CD8-positive, alpha-beta T cell (primary cell): ENCODE measurements at regions of chr17 and their contacts with region 1.

Region 1: DNA sequence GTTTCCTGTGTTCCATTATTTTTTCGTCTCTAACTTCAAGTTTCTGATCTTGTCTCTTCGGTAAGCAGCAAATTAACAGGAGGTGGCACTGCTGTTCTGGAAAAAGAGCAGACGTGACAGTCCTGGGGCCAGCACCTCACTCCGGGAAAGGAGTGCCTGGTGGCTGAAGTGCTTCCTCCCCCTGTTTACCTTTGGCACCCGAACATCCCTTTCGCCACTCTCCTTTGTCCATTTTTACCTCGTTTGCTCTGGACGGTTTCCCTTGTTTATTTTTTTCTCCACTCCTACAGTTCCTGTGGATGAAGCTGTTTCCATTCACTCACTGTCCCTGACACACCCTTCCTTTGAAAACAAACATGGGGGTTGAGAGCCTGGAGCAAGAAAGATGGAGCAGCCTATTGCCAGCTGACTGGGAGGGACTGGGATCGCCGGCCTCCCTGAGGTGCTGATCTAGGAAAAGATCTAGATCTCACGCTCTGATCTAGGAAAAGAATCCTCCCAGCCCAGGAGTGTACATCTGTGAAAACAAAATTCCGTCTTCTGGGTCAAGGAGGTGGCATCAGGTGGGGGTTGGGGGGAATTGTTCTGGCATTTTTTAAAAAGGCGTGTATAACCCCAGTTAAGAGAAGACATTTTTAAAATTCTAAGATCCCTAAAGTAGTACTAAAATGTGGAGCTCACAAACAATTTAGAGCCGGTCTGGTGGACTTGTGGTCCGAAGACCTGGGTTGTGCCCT is 12.7 kb downstream of the SAP30BP start:
- DNase-seq: no peak
- ATAC-seq: no peak
- H3K4me3 ChIP-seq: no peak overlapping the region
- H3K4me3 Mint-ChIP-seq: no peak overlapping the region
- H3K27ac ChIP-seq: no peak overlapping the region
- H3K27ac Mint-ChIP-seq: no peak overlapping the region
- H3K4me1 ChIP-seq: no peaks in the 10 kb centered on the region
- H3K4me1 Mint-ChIP-seq: peaks cover 12% of the 10 kb centered on the region
- H3K27me3 ChIP-seq: no peaks in the 10 kb centered on the region
- H3K27me3 Mint-ChIP-seq: no peaks in the 10 kb centered on the region
- CTCF ChIP-seq: no peak

Region 2: GRCh38 chr17:75652915-75653549 is 26.8 kb before region 1 on chr17:
- CTCF ChIA-PET with region 1: interaction called, 11 read pairs
- POLR2A ChIA-PET with region 1: no interaction called
- intact Hi-C with region 1: loop called in 1 of 2 experiments (anchors 1 kb)
- DNase-seq: peak in 6 of 9 experiments; percentile 9 to 64 (median 42)
- ATAC-seq: peak; percentile 100
- H3K4me3 ChIP-seq: no peak overlapping the region
- H3K4me3 Mint-ChIP-seq: no peak overlapping the region
- H3K27ac ChIP-seq: no peak overlapping the region
- H3K27ac Mint-ChIP-seq: no peak overlapping the region
- H3K4me1 ChIP-seq: no peaks in the 10 kb centered on the region
- H3K4me1 Mint-ChIP-seq: peaks cover 9% of the 10 kb centered on the region
- H3K27me3 ChIP-seq: no peaks in the 10 kb centered on the region
- H3K27me3 Mint-ChIP-seq: no peaks in the 10 kb centered on the region
- CTCF ChIP-seq: peak; percentile 59

Region 3: DNA sequence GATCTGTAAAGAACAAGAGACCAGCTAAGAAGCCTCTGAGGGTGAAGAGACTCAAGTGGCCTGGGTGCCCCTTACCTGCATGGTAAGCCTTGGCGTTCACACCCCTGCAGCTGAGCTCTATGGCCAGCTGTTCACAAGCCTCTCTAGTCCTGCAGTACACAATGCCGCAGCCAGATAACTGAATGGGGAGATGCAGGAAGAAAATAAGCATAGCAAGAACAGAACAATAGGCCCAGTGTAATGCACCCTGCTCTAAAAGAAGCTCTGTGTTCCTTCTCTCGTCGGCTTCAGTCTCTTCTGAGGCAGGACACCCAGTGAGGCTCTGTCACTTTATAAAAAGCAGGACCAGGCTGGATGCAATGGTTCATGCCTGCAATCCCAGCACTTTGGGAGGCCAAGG is 18.3 kb before region 1 on chr17:
- CTCF ChIA-PET with region 1: interaction called, 10 read pairs
- POLR2A ChIA-PET with region 1: no interaction called
- intact Hi-C with region 1: no loop called
- DNase-seq: no peak
- ATAC-seq: no peak
- H3K4me3 ChIP-seq: no peak overlapping the region
- H3K4me3 Mint-ChIP-seq: no peak overlapping the region
- H3K27ac ChIP-seq: no peak overlapping the region
- H3K27ac Mint-ChIP-seq: no peak overlapping the region
- H3K4me1 ChIP-seq: peaks cover 8% of the 10 kb centered on the region
- H3K4me1 Mint-ChIP-seq: peaks cover 13% of the 10 kb centered on the region
- H3K27me3 ChIP-seq: no peaks in the 10 kb centered on the region
- H3K27me3 Mint-ChIP-seq: no peaks in the 10 kb centered on the region
- CTCF ChIP-seq: no peak

Region 4: GRCh38 chr17:75693500-75694481 is 13.9 kb after region 1 on chr17:
- CTCF ChIA-PET with region 1: interaction called, 11 read pairs
- POLR2A ChIA-PET with region 1: no interaction called
- intact Hi-C with region 1: loop called in 1 of 2 experiments (anchors 1 kb)
- DNase-seq: no peak
- ATAC-seq: no peak
- H3K4me3 ChIP-seq: no peak overlapping the region
- H3K4me3 Mint-ChIP-seq: no peak overlapping the region
- H3K27ac ChIP-seq: no peak overlapping the region
- H3K27ac Mint-ChIP-seq: no peak overlapping the region
- H3K4me1 ChIP-seq: peaks cover 26% of the 10 kb centered on the region
- H3K4me1 Mint-ChIP-seq: peaks cover 34% of the 10 kb centered on the region
- H3K27me3 ChIP-seq: no peaks in the 10 kb centered on the region
- H3K27me3 Mint-ChIP-seq: no peaks in the 10 kb centered on the region
- CTCF ChIP-seq: no peak

Region 5: DNA sequence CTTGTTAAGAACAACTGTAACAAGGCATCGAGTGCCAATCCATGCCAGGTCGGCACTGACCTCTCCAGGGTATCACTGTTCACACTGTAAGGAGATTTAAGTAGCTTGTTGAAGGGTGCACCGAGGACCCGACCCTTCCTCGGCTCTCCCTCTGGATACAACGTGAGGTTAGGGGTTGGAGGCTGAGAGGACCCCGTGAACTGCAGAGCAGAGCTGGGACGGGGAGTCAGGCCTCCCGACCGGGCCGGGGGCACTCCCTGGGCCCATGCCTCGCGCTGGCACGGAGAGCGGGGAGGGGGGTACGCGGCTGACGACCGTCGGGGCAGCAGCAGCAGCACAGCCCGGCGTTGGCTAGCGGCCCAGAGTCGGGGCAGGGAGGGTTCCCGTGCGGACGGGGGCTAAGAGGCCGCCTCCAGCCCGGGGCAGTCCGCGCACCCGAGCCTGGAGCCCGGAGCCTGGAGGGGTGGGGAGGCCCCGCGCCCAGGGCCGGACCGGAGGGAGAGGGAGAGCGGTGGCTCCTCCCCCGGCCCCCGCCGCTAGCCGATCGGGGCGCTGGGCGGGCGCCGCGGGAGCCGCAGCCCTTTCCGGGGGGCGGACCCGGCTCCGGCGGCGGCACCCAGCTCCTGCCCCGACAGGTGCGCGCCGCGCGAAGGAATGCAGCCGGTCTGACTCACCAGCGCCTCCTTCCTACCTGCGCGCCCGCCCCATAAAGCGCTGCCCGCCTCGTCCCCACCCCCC is 41.0 kb after region 1 on chr17 and contains the start of gene ITGB4:
- CTCF ChIA-PET with region 1: interaction called, 3 read pairs
- POLR2A ChIA-PET with region 1: no interaction called
- intact Hi-C with region 1: loop called in 1 of 2 experiments (anchors 2 kb)
- DNase-seq: peak; percentile 20 to 84 (median 73)
- ATAC-seq: peak; percentile 96
- H3K4me3 ChIP-seq: peak within 1 kb of the TSS; percentile 43 to 80
- H3K4me3 Mint-ChIP-seq: peak within 1 kb of the TSS; percentile 81
- H3K27ac ChIP-seq: no peak within 1 kb of the TSS
- H3K27ac Mint-ChIP-seq: no peak within 1 kb of the TSS
- H3K4me1 ChIP-seq: peaks cover 4% of the 10 kb centered on the region
- H3K4me1 Mint-ChIP-seq: peaks cover 3% of the 10 kb centered on the region
- H3K27me3 ChIP-seq: no peaks in the 10 kb centered on the region
- H3K27me3 Mint-ChIP-seq: peaks cover 8% of the 10 kb centered on the region
- CTCF ChIP-seq: no peak
- total RNA-seq, gene ITGB4: 1.2 to 2.3 TPM